ENCODE measurements at regions of chr10 and their contacts with region 1.

Region 1: GRCh38 chr10:44974628-44975431 is 3.8 kb downstream of the DEPP1 start:
- DNase-seq: peak; percentile 81
- ATAC-seq: peak; percentile 90
- H3K4me3 Mint-ChIP-seq: peak overlapping the region; percentile 80
- H3K27ac Mint-ChIP-seq: peak overlapping the region; percentile 75
- H3K4me1 Mint-ChIP-seq: peaks cover 28% of the 10 kb centered on the region
- H3K27me3 Mint-ChIP-seq: no peaks in the 10 kb centered on the region
- CTCF ChIP-seq: no peak

Region 2: GRCh38 chr10:44864637-44865288 is 110.1 kb before region 1 on chr10:
- CTCF ChIA-PET with region 1: no interaction called
- POLR2A ChIA-PET with region 1: no interaction called
- intact Hi-C with region 1: loop called (anchors 1 kb)
- DNase-seq: peak; percentile 77
- ATAC-seq: peak; percentile 88
- H3K4me3 Mint-ChIP-seq: peak overlapping the region; percentile 87
- H3K27ac Mint-ChIP-seq: no peak overlapping the region
- H3K4me1 Mint-ChIP-seq: peaks cover 12% of the 10 kb centered on the region
- H3K27me3 Mint-ChIP-seq: peaks cover 56% of the 10 kb centered on the region
- CTCF ChIP-seq: peak; percentile 54

Region 3: GRCh38 chr10:44959247-44960087 is 15.4 kb before region 1 on chr10 and contains the start of gene RASSF4:
- CTCF ChIA-PET with region 1: interaction called, 7 read pairs
- POLR2A ChIA-PET with region 1: interaction called, 20 read pairs
- intact Hi-C with region 1: loop called (anchors 1 kb)
- DNase-seq: peak; percentile 90
- ATAC-seq: peak; percentile 99
- H3K4me3 Mint-ChIP-seq: peak within 1 kb of the TSS; percentile 85
- H3K27ac Mint-ChIP-seq: peak within 1 kb of the TSS; percentile 80
- H3K4me1 Mint-ChIP-seq: peaks cover 53% of the 10 kb centered on the region
- H3K27me3 Mint-ChIP-seq: no peaks in the 10 kb centered on the region
- CTCF ChIP-seq: no peak
- total RNA-seq, gene RASSF4: 2.0 and 2.5 TPM in 2 replicates

Region 4: GRCh38 chr10:45000752-45001380 is 26.0 kb after region 1 on chr10 and contains the start of gene ZNF22:
- CTCF ChIA-PET with region 1: interaction called, 4 read pairs
- POLR2A ChIA-PET with region 1: interaction called, 7 read pairs
- intact Hi-C with region 1: loop called (anchors 2 kb)
- DNase-seq: peak; percentile 76
- ATAC-seq: peak; percentile 82
- H3K4me3 Mint-ChIP-seq: peak within 1 kb of the TSS; percentile 90
- H3K27ac Mint-ChIP-seq: peak within 1 kb of the TSS; percentile 93
- H3K4me1 Mint-ChIP-seq: peaks cover 25% of the 10 kb centered on the region
- H3K27me3 Mint-ChIP-seq: no peaks in the 10 kb centered on the region
- CTCF ChIP-seq: no peak
- total RNA-seq, gene ZNF22: 34.2 and 37.5 TPM in 2 replicates

Measured in activated B cell treated with CpG ODN at 0.5 μM for 24 hours (primary cell).